ENCODE measurements at regions of chr19 and their contacts with region 1.

Region 1: DNA sequence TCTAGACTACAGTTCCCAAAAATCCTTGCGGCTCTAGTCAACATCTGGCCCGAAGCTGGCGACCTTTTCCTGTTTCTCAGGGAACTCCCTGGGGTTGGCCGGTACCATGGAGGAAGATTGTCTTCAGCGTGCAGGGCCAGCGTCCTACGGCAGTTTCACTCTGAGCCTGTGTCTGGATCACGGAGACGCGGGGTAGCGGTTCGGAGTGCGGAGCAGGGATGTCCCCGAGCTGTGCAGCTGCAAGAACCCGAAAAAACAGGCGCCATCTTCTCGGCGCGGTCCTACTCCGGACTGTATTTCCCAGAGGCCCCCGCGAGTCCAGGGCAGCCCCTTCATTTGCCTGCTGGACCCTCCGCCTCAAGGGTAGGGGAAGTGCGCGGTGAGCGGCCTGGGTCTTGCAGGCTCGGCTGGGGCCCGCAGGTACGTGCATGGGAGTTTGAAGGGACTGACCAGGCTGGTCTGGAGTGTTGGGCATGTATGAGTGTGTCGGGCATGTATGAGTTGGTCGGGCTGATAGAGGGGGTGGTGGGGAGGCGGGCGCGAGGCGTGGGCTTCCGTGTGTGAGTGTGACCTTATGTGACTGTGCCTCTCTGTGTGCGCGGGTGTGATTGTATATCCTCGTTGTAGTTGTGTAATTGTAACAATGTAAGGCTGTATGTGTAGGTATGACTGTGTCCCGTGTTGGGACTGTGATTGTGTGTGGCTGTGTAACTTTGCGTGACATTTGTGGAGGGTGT is at the start of gene ZNF383:
- DNase-seq: peak; percentile 92 to 95
- ATAC-seq: peak; percentile 98
- H3K4me3 ChIP-seq: peak within 1 kb of the TSS; percentile 84 to 88
- H3K27ac ChIP-seq: peak within 1 kb of the TSS in 1 of 2 donors; percentile 85
- H3K4me1 ChIP-seq: no peaks in the 10 kb centered on the region
- H3K27me3 ChIP-seq: no peaks in the 10 kb centered on the region
- total RNA-seq, gene ZNF383: 10.0 to 16.1 TPM

Region 2: GRCh38 chr19:36915992-36916830 is 301.8 kb before region 1 on chr19 and contains the starts of genes ZNF568 and ZNF829:
- intact Hi-C with region 1: loop called in 1 of 2 experiments (anchors 5 kb)
- DNase-seq: peak; percentile 94 to 97
- ATAC-seq: peak; percentile 96
- H3K4me3 ChIP-seq: peak within 1 kb of the TSS; percentile 77 to 81
- H3K27ac ChIP-seq: peak within 1 kb of the TSS; percentile 45 to 97
- H3K4me1 ChIP-seq: no peaks in the 10 kb centered on the region
- H3K27me3 ChIP-seq: no peaks in the 10 kb centered on the region
- total RNA-seq, gene ZNF568: 14.0 to 15.8 TPM
- total RNA-seq, gene ZNF829: 3.1 to 3.5 TPM

Region 3: GRCh38 chr19:37148214-37148613 is 69.8 kb before region 1 on chr19:
- intact Hi-C with region 1: no loop called
- DNase-seq: no peak
- ATAC-seq: no peak
- H3K4me3 ChIP-seq: no peak overlapping the region
- H3K27ac ChIP-seq: no peak overlapping the region
- H3K4me1 ChIP-seq: no peaks in the 10 kb centered on the region
- H3K27me3 ChIP-seq: no peaks in the 10 kb centered on the region

Region 4: DNA sequence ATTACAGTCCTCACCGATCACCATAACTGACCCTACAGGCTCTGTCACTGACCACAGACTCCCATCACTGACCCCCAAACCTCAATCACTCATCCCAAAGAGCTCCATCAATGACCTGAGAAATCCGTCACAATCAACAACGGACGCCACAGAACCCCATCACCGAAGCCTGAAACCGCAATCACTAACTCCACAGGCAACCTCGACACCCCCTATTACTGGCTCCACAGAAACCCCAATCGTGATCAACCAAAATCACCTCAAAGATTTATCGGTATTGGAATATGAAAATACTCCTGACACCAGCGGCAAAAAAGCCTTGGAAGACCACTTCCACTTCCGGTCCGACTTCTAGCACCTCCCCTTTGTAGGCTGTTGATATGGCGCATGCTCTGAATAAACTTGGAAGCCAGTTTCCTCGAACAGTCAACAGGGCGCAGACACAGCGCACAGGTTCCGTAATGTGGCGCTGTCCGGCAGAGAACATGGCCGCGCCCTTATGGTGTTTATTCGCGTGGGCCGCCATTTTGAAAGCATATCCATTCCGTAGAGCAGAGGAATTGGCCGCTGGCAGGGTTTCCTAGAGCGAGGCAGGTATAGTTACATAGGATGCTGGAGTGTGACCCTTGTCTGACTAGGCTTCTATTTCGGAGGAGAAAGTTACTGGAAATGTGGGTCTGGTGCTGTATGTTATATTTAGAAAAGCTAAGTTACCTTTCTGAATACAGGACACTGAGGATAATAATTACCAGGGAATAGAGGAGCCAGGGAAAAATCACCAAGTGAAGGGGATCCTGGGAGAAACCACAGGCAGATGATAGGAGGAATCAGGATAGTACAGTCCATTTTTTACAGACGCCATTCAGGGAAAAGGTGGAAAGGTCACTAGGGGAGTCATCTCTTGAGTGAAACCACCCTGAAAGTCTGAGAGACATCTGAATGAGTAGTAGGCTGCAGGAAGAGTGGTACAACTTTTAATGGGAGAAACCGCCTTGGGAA is 45.4 kb before region 1 on chr19 and contains the start of gene ZNF585A:
- intact Hi-C with region 1: loop called in 1 of 2 experiments (anchors 2 kb)
- DNase-seq: peak; percentile 95
- ATAC-seq: peak; percentile 100
- H3K4me3 ChIP-seq: peak within 1 kb of the TSS; percentile 63 to 100
- H3K27ac ChIP-seq: peak within 1 kb of the TSS in 1 of 2 donors; percentile 64
- H3K4me1 ChIP-seq: no peaks in the 10 kb centered on the region
- H3K27me3 ChIP-seq: no peaks in the 10 kb centered on the region
- total RNA-seq, gene ZNF585A: 8.6 to 15.1 TPM

Region 5: GRCh38 chr19:37334179-37335071 is 116.4 kb after region 1 on chr19:
- intact Hi-C with region 1: loop called in 1 of 2 experiments (anchors 10 kb)
- DNase-seq: peak; percentile 95 to 98
- ATAC-seq: peak; percentile 98
- H3K4me3 ChIP-seq: peak overlapping the region; percentile 45 to 72
- H3K27ac ChIP-seq: peak overlapping the region in 1 of 2 donors; percentile 85
- H3K4me1 ChIP-seq: peaks cover 0 to 4% of the 10 kb centered on the region in 2 donors
- H3K27me3 ChIP-seq: no peaks in the 10 kb centered on the region

Measured in aorta (tissue), 5 donors.